ENCODE measurements at regions of chr1 and their contacts with region 1.

Region 1: GRCh38 chr1:33045814-33046213 is 9.1 kb upstream of the AK2 start:
- DNase-seq: peak in 25 of 35 experiments; percentile 4 to 73 (median 30)
- ATAC-seq: peak in 3 of 4 experiments; percentile 19 to 75 (median 72)
- H3K4me3 ChIP-seq: no peak overlapping the region
- H3K4me3 Mint-ChIP-seq: no peak overlapping the region
- H3K27ac ChIP-seq: peak overlapping the region; percentile 50
- H3K27ac Mint-ChIP-seq: peak overlapping the region in 1 of 2 donors; percentile 27
- H3K4me1 ChIP-seq: peaks cover 0 to 10% of the 10 kb centered on the region in 2 experiments
- H3K4me1 Mint-ChIP-seq: peaks cover 0 to 12% (median 8%) of the 10 kb centered on the region in 3 donors
- H3K27me3 ChIP-seq: no peaks in the 10 kb centered on the region
- H3K27me3 Mint-ChIP-seq: peaks cover 3 to 6% of the 10 kb centered on the region in 2 donors

Region 2: DNA sequence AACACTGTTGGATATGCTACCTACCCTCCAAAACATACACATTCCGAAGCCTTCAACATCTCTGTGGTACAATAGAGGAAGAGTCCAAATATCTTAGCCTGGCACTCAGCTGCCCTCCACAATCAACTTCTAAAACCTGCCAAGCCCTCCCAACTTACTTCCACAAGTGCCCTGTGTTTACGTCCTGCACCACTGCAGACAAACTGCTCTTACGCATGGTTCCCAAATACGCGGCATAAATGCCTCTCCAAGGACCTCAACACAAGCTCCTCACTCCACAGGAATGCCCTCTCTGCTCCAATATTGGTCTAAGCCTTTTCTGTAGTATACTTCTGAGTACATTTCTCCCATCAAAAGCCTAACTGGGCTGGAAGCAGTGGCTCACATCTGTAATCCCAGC is 15.9 kb before region 1 on chr1:
- CTCF ChIA-PET with region 1: interaction called in 1 of 2 experiments, 10 read pairs
- POLR2A ChIA-PET with region 1: no interaction called
- DNase-seq: no peak
- ATAC-seq: no peak
- H3K4me3 ChIP-seq: no peak overlapping the region
- H3K4me3 Mint-ChIP-seq: no peak overlapping the region
- H3K27ac ChIP-seq: no peak overlapping the region
- H3K27ac Mint-ChIP-seq: no peak overlapping the region
- H3K4me1 ChIP-seq: peaks cover 0 to 21% of the 10 kb centered on the region in 2 experiments
- H3K4me1 Mint-ChIP-seq: peaks cover 59 to 69% (median 68%) of the 10 kb centered on the region in 3 donors
- H3K27me3 ChIP-seq: no peaks in the 10 kb centered on the region
- H3K27me3 Mint-ChIP-seq: no peaks in the 10 kb centered on the region

Measured in T-cell (primary cell).